A549 (cell line): ENCODE measurements at regions of chr1 and their contacts with region 1.

Region 1: GRCh38 chr1:27044613-27045151 is 32.0 kb upstream of the TENT5B start:
- DNase-seq: peak; percentile 66 to 76
- ATAC-seq: peak; percentile 88 to 94
- H3K4me3 ChIP-seq: no peak overlapping the region
- H3K27ac ChIP-seq: peak overlapping the region in 1 of 2 experiments; percentile 29; a peak in 3 of 6 replicates
- H3K4me1 ChIP-seq: 0 out of 3 replicates have a peak, but pooled peaks cover 4% of the 10 kb centered on the region
- CTCF ChIP-seq: peak; percentile 80
- EP300 ChIP-seq: no peak
- POLR2A ChIP-seq: no peak
- RAD21 ChIP-seq: peak; percentile 90 to 92

Region 2: DNA sequence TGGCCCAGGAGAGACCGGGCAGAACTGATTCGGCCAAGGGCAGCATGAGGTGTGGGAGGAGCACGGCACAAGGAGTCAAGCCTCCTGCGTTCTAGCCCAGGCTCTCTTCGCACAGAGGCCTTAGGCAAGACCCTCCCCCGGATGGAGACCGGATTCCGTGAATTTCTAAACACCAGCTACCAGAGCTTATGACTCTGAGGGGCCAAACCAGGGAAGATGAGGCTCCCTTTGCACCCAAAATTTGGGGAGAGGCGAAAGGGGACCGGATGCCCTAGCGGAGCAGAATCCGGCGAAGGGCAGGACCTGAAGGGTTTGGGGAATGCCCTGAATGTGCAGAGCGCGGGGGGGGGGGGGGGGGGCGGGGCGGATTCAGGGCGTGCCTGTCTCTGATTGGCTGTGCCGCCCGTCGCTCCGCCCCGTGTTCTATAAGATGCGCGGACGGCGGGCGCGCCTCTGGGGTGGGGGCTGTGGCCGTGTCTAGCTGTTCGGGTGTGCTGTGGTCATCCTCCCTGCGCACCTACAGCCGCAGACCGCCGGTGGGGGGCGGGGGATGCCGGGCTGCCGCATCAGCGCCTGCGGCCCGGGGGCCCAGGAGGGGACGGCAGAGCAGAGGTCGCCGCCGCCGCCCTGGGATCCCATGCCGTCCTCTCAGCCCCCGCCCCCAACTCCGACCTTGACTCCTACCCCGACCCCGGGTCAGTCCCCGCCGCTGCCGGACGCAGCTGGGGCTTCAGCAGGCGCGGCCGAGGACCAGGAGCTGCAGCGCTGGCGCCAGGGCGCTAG is 51.3 kb before region 1 on chr1 and contains the start of gene TRNP1:
- CTCF ChIA-PET with region 1: interaction called, 51 read pairs
- POLR2A ChIA-PET with region 1: no interaction called
- DNase-seq: peak; percentile 77 to 91
- ATAC-seq: peak; percentile 36 to 56
- H3K4me3 ChIP-seq: peak within 1 kb of the TSS; percentile 96
- H3K27ac ChIP-seq: peak within 1 kb of the TSS; percentile 100
- H3K4me1 ChIP-seq: peaks cover 53% of the 10 kb centered on the region
- CTCF ChIP-seq: no peak
- EP300 ChIP-seq: no peak
- POLR2A ChIP-seq: peak; percentile 99
- RAD21 ChIP-seq: 0 out of 5 replicates have a peak, but pooled peaks of 1 of the 2 experiments have one; percentile 17
- polyA plus RNA-seq, gene TRNP1: 113 and 134 TPM in 2 replicates

Region 3: GRCh38 chr1:27057801-27058625 is 13.3 kb after region 1 on chr1:
- CTCF ChIA-PET with region 1: interaction called, 74 read pairs
- POLR2A ChIA-PET with region 1: no interaction called
- DNase-seq: no peak
- ATAC-seq: peak; percentile 34 to 72; a peak in 4 of 6 replicates
- H3K4me3 ChIP-seq: no peak overlapping the region
- H3K27ac ChIP-seq: no peak overlapping the region
- H3K4me1 ChIP-seq: no peaks in the 10 kb centered on the region
- CTCF ChIP-seq: no peak
- EP300 ChIP-seq: no peak
- POLR2A ChIP-seq: no peak
- RAD21 ChIP-seq: no peak

Region 4: DNA sequence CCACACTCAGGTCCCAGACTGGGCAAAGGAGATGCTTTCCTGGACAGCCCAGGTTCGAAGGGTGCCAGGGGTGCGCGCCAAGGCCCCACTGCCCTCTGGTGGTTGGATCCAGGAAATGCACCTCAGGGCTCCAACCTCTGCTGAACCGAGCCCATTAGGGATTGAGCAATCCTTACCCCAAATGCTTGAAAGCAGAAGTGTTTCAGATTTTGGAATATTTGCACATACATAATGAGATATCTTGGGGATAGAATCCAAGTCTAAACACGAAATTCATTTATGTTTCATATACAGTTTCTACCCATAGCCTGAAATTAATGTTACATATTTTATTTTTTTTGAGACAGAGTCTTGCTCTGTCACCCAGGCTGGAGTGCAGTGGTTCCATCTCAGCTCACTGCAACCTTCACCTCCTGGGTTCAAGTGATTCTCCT is 52.8 kb after region 1 on chr1:
- CTCF ChIA-PET with region 1: interaction called, 516 read pairs
- POLR2A ChIA-PET with region 1: interaction called, 3 read pairs
- DNase-seq: peak; percentile 71
- ATAC-seq: peak; percentile 68 to 83; a peak in 5 of 6 replicates
- H3K4me3 ChIP-seq: no peak overlapping the region
- H3K27ac ChIP-seq: 0 out of 6 replicates have a peak overlapping the region, but pooled peaks of 1 of the 2 experiments have one; percentile 43
- H3K4me1 ChIP-seq: peaks cover 32% of the 10 kb centered on the region
- CTCF ChIP-seq: peak; percentile 79
- EP300 ChIP-seq: no peak
- POLR2A ChIP-seq: no peak
- RAD21 ChIP-seq: peak; percentile 86 to 88

Region 5: GRCh38 chr1:27284425-27285273 is 240.0 kb after region 1 on chr1:
- CTCF ChIA-PET with region 1: interaction called, 26 read pairs
- POLR2A ChIA-PET with region 1: no interaction called
- DNase-seq: peak; percentile 73 to 84
- ATAC-seq: peak; percentile 93 to 95
- H3K4me3 ChIP-seq: no peak overlapping the region
- H3K27ac ChIP-seq: no peak overlapping the region
- H3K4me1 ChIP-seq: no peaks in the 10 kb centered on the region
- CTCF ChIP-seq: peak; percentile 78
- EP300 ChIP-seq: no peak
- POLR2A ChIP-seq: no peak
- RAD21 ChIP-seq: peak; percentile 73 to 76

Region 6: GRCh38 chr1:27392096-27392777 is 347.6 kb after region 1 on chr1 and contains the start of gene GPR3:
- CTCF ChIA-PET with region 1: interaction called, 10 read pairs
- POLR2A ChIA-PET with region 1: no interaction called
- DNase-seq: peak; percentile 81 to 88
- ATAC-seq: peak; percentile 74 to 85
- H3K4me3 ChIP-seq: peak within 1 kb of the TSS; percentile 70
- H3K27ac ChIP-seq: peak within 1 kb of the TSS; percentile 74 to 89
- H3K4me1 ChIP-seq: peaks cover 17% of the 10 kb centered on the region
- CTCF ChIP-seq: peak; percentile 50
- EP300 ChIP-seq: no peak
- POLR2A ChIP-seq: no peak
- RAD21 ChIP-seq: peak; percentile 12 to 33; a peak in 2 of 5 replicates
- polyA plus RNA-seq, gene GPR3: 1.3 and 1.7 TPM in 2 replicates